MCF 10A (cell line): ENCODE measurements at regions of chr3 and their contacts with region 1.

Region 1: GRCh38 chr3:192444096-192444790 is 283.1 kb downstream of the FGF12 start:
- DNase-seq: peak; percentile 68
- H3K4me3 Mint-ChIP-seq: no peak overlapping the region
- H3K27ac Mint-ChIP-seq: no peak overlapping the region
- H3K4me1 Mint-ChIP-seq: no peaks in the 10 kb centered on the region
- H3K27me3 Mint-ChIP-seq: peaks cover 83% of the 10 kb centered on the region
- CTCF ChIP-seq: peak; percentile 97

Region 2: DNA sequence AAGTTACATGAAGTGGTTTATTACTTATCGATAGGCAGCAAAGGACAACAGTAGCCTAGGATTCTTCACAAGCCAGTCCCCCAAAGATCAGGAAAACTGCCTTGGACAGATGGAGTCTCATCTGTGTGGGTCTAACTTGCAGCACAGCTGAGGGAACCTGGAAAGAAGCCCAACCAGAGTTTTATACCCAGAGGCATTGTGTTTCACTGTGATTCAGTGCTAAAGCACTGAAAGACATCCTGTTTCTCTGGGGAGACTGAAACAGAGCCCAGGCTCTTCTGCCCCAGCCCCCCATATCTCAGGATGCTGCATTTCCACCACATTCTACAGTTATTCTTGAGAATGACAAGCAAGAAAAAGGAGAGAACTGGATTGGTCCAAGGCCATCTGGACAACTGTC is 1031.5 kb before region 1 on chr3:
- CTCF ChIA-PET with region 1: interaction called, 18 read pairs
- POLR2A ChIA-PET with region 1: interaction called, 5 read pairs
- intact Hi-C with region 1: loop called (anchors 1 kb)
- DNase-seq: peak; percentile 77
- H3K4me3 Mint-ChIP-seq: no peak overlapping the region
- H3K27ac Mint-ChIP-seq: peak overlapping the region; percentile 57
- H3K4me1 Mint-ChIP-seq: peaks cover 12% of the 10 kb centered on the region
- H3K27me3 Mint-ChIP-seq: no peaks in the 10 kb centered on the region
- CTCF ChIP-seq: no peak

Region 3: GRCh38 chr3:191455257-191455952 is 988.8 kb before region 1 on chr3:
- CTCF ChIA-PET with region 1: interaction called, 10 read pairs
- POLR2A ChIA-PET with region 1: no interaction called
- intact Hi-C with region 1: no loop called
- DNase-seq: no peak
- H3K4me3 Mint-ChIP-seq: no peak overlapping the region
- H3K27ac Mint-ChIP-seq: no peak overlapping the region
- H3K4me1 Mint-ChIP-seq: peaks cover 6% of the 10 kb centered on the region
- H3K27me3 Mint-ChIP-seq: no peaks in the 10 kb centered on the region
- CTCF ChIP-seq: no peak

Region 4: DNA sequence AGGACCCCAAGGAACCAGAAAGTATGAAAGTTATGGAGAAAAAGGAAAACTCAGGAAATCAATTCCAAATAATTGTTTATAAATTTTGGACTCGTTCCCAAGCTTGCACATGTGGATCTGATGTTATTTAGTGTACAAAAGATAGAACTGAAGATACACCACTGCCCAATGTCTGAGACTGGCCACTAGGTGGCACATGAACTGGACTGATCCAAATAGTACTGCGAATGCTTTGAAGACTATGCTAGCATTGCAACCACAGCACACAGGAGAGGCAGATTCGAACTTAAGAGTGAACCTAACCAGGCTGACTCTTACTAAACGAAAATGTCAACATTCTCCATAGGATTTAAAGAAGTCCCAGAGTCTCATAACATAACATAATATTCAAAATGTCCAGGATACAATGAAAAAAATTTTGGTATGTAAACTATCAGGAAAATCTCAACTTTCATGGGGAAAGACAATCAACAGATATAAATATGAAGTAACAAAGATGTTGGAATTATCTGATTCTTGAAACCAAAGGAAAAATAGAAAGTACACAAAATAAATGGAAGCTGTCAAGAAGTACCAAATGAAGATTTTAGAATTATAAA is 313.6 kb before region 1 on chr3:
- CTCF ChIA-PET with region 1: interaction called, 26 read pairs
- POLR2A ChIA-PET with region 1: no interaction called
- intact Hi-C with region 1: loop called (anchors 1 kb)
- DNase-seq: peak; percentile 70
- H3K4me3 Mint-ChIP-seq: no peak overlapping the region
- H3K27ac Mint-ChIP-seq: no peak overlapping the region
- H3K4me1 Mint-ChIP-seq: no peaks in the 10 kb centered on the region
- H3K27me3 Mint-ChIP-seq: no peaks in the 10 kb centered on the region
- CTCF ChIP-seq: peak; percentile 70

Region 5: GRCh38 chr3:192239956-192240355 is 204.3 kb before region 1 on chr3:
- CTCF ChIA-PET with region 1: no interaction called
- POLR2A ChIA-PET with region 1: no interaction called
- intact Hi-C with region 1: no loop called
- DNase-seq: no peak
- H3K4me3 Mint-ChIP-seq: no peak overlapping the region
- H3K27ac Mint-ChIP-seq: no peak overlapping the region
- H3K4me1 Mint-ChIP-seq: no peaks in the 10 kb centered on the region
- H3K27me3 Mint-ChIP-seq: peaks cover 100% of the 10 kb centered on the region
- CTCF ChIP-seq: no peak

Region 6: GRCh38 chr3:192423003-192423349 is 21.3 kb before region 1 on chr3:
- CTCF ChIA-PET with region 1: interaction called, 24 read pairs
- POLR2A ChIA-PET with region 1: interaction called, 3 read pairs
- intact Hi-C with region 1: no loop called
- DNase-seq: peak; percentile 43
- H3K4me3 Mint-ChIP-seq: no peak overlapping the region
- H3K27ac Mint-ChIP-seq: no peak overlapping the region
- H3K4me1 Mint-ChIP-seq: no peaks in the 10 kb centered on the region
- H3K27me3 Mint-ChIP-seq: peaks cover 5% of the 10 kb centered on the region
- CTCF ChIP-seq: peak; percentile 52

Region 7: GRCh38 chr3:192467230-192468140 is 23.2 kb after region 1 on chr3:
- CTCF ChIA-PET with region 1: interaction called, 10 read pairs
- POLR2A ChIA-PET with region 1: no interaction called
- intact Hi-C with region 1: no loop called
- DNase-seq: peak; percentile 72
- H3K4me3 Mint-ChIP-seq: no peak overlapping the region
- H3K27ac Mint-ChIP-seq: no peak overlapping the region
- H3K4me1 Mint-ChIP-seq: no peaks in the 10 kb centered on the region
- H3K27me3 Mint-ChIP-seq: peaks cover 82% of the 10 kb centered on the region
- CTCF ChIP-seq: peak; percentile 94

Region 8: GRCh38 chr3:192577811-192578210 is 133.6 kb after region 1 on chr3:
- CTCF ChIA-PET with region 1: no interaction called
- POLR2A ChIA-PET with region 1: no interaction called
- intact Hi-C with region 1: no loop called
- DNase-seq: no peak
- H3K4me3 Mint-ChIP-seq: no peak overlapping the region
- H3K27ac Mint-ChIP-seq: no peak overlapping the region
- H3K4me1 Mint-ChIP-seq: no peaks in the 10 kb centered on the region
- H3K27me3 Mint-ChIP-seq: peaks cover 76% of the 10 kb centered on the region
- CTCF ChIP-seq: no peak

Region 9: GRCh38 chr3:194204042-194204987 is 1760.1 kb after region 1 on chr3:
- CTCF ChIA-PET with region 1: no interaction called
- POLR2A ChIA-PET with region 1: no interaction called
- intact Hi-C with region 1: no loop called
- DNase-seq: no peak
- H3K4me3 Mint-ChIP-seq: peak overlapping the region; percentile 51
- H3K27ac Mint-ChIP-seq: no peak overlapping the region
- H3K4me1 Mint-ChIP-seq: no peaks in the 10 kb centered on the region
- H3K27me3 Mint-ChIP-seq: peaks cover 2% of the 10 kb centered on the region
- CTCF ChIP-seq: no peak